ENCODE measurements at regions of chr1 and their contacts with region 1.

Region 1: GRCh38 chr1:12275369-12275768 is 45.5 kb downstream of the VPS13D start:
- DNase-seq: peak; percentile 5 to 75
- H3K4me3 ChIP-seq: no peak overlapping the region
- H3K27ac ChIP-seq: no peak overlapping the region
- H3K4me1 ChIP-seq: peaks cover 0 to 5% (median 0%) of the 10 kb centered on the region in 4 experiments; a peak in 1 of 7 replicates
- H3K27me3 ChIP-seq: no peaks in the 10 kb centered on the region
- CTCF ChIP-seq: peak; percentile 68 to 91 (median 81)
- EP300 ChIP-seq: no peak
- POLR2A ChIP-seq: no peak
- RAD21 ChIP-seq: peak; percentile 39

Region 2: GRCh38 chr1:12229835-12230548 is 45.4 kb before region 1 on chr1 and contains the start of gene VPS13D:
- CTCF ChIA-PET with region 1: interaction called, 12 read pairs
- POLR2A ChIA-PET with region 1: interaction called, 3 read pairs
- DNase-seq: peak; percentile 33 to 94
- H3K4me3 ChIP-seq: peak within 1 kb of the TSS; percentile 55 to 95 (median 66)
- H3K27ac ChIP-seq: no peak within 1 kb of the TSS
- H3K4me1 ChIP-seq: peaks cover 0 to 7% (median 3%) of the 10 kb centered on the region in 4 experiments; a peak in 4 of 7 replicates
- H3K27me3 ChIP-seq: no peaks in the 10 kb centered on the region; a peak in 1 of 7 replicates
- CTCF ChIP-seq: peak; percentile 83 to 92 (median 88)
- EP300 ChIP-seq: peak in 1 of 2 experiments; percentile 76; a peak in 1 of 3 replicates
- POLR2A ChIP-seq: no peak
- RAD21 ChIP-seq: no peak; a peak in 1 of 4 replicates
- total RNA-seq, gene VPS13D: 31.2 and 32.7 TPM in 2 replicates

Region 3: DNA sequence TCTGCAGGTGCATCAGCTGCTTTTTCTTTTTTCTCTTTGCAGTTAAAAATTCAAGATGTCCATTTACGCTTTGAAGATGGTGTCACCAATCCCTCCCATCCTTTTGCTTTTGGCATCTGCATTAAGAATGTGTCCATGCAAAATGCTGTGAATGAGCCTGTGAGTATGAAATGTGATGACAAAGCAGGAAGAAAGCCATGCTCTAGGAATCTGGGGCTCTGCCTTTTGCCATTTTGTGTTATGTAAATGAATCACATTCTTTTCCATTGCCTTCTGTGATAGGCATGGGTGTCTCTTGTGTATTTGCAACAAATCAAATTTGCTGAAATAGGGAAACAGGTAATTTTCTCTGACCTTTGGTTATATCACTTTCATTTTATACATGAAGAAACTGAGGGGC is 26.2 kb before region 1 on chr1:
- CTCF ChIA-PET with region 1: interaction called, 12 read pairs
- POLR2A ChIA-PET with region 1: no interaction called
- DNase-seq: peak in 1 of 2 experiments; percentile 19
- H3K4me3 ChIP-seq: no peak overlapping the region
- H3K27ac ChIP-seq: no peak overlapping the region
- H3K4me1 ChIP-seq: peaks cover 0 to 9% (median 6%) of the 10 kb centered on the region in 4 experiments; a peak in 4 of 7 replicates
- H3K27me3 ChIP-seq: no peaks in the 10 kb centered on the region
- CTCF ChIP-seq: no peak
- EP300 ChIP-seq: no peak
- POLR2A ChIP-seq: no peak
- RAD21 ChIP-seq: no peak

Region 4: DNA sequence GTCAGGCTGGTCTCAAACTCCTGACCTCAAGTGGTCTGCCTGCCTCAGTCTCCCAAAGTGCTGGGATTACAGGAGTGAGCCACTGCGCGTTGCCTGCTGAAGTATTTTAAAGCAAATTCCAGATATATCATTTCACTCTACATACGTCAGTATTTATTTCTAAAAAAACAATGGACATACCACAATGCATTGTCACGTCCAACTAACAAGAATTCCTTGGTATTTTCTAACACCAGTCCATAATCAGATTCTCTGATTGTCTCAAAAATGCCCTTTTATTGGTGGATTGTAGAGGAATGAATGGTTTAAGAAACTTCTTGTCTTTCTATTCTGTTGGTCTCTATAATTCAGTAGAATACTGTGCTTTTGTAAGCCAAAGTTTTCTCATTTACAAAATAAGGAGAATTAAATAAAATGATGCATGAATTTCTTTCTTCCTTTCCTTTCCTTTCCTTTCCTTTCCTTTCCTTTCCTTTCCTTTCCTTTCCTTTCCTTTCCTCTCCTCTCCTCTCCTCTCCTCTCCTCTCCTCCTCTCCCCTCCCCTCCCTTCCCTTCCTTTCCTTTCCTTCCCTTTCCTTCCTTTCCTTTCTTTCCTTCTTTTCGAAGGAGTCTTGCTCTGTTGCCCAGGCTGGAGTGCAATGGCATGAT is 10.3 kb after region 1 on chr1:
- CTCF ChIA-PET with region 1: interaction called, 38 read pairs
- POLR2A ChIA-PET with region 1: no interaction called
- DNase-seq: no peak
- H3K4me3 ChIP-seq: no peak overlapping the region
- H3K27ac ChIP-seq: no peak overlapping the region
- H3K4me1 ChIP-seq: no peaks in the 10 kb centered on the region
- H3K27me3 ChIP-seq: no peaks in the 10 kb centered on the region
- CTCF ChIP-seq: no peak
- EP300 ChIP-seq: no peak
- POLR2A ChIP-seq: no peak
- RAD21 ChIP-seq: no peak

Region 5: GRCh38 chr1:12333036-12333785 is 57.8 kb after region 1 on chr1:
- CTCF ChIA-PET with region 1: no interaction called
- POLR2A ChIA-PET with region 1: no interaction called
- DNase-seq: no peak
- H3K4me3 ChIP-seq: no peak overlapping the region
- H3K27ac ChIP-seq: no peak overlapping the region
- H3K4me1 ChIP-seq: no peaks in the 10 kb centered on the region
- H3K27me3 ChIP-seq: no peaks in the 10 kb centered on the region
- CTCF ChIP-seq: no peak
- EP300 ChIP-seq: no peak
- POLR2A ChIP-seq: no peak
- RAD21 ChIP-seq: no peak

Region 6: DNA sequence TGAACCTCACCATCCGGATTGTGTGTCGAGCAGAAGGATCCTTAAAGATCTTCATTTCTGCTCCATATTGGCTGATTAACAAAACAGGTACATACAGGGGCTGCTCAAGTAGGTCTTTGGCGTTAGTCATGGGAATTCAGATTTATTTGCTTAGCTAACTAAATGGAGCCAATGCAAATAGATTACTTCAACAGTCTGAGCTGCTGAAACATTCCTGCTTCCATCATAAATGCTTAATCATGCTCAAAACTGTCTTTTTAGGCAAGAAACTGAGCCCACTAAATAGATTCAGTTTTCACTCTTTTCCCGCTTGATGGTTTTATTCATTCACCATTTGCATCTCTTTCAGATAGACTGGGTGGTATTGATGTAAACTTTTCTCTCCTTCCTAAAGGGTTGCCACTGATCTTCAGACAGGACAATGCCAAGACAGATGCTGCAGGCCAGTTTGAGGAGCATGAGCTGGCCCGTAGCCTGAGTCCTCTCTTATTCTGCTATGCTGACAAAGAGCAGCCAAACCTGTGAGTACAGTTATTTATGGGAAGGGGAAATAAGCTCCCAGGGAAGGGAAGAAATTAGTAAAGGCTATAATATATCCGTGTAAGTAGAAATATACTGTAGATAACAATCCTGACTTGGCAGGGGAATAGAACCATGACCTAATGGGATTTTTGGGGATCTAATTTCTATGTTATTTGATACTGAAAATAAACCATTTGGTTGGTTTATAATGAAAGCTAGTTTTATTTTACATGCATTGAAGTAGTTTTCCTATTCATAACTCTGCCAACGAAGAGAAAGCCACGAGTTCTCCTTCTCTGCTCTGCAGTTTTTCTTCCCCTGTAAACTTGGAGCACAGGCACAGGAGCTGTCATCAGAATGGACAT is 80.9 kb after region 1 on chr1:
- CTCF ChIA-PET with region 1: interaction called, 11 read pairs
- POLR2A ChIA-PET with region 1: no interaction called
- DNase-seq: no peak
- H3K4me3 ChIP-seq: no peak overlapping the region
- H3K27ac ChIP-seq: no peak overlapping the region
- H3K4me1 ChIP-seq: peaks cover 0 to 6% (median 2%) of the 10 kb centered on the region in 4 experiments; a peak in 4 of 7 replicates
- H3K27me3 ChIP-seq: no peaks in the 10 kb centered on the region
- CTCF ChIP-seq: no peak
- EP300 ChIP-seq: no peak
- POLR2A ChIP-seq: no peak
- RAD21 ChIP-seq: no peak

Region 7: GRCh38 chr1:12658531-12659453 is 383.4 kb after region 1 on chr1:
- CTCF ChIA-PET with region 1: interaction called, 26 read pairs
- POLR2A ChIA-PET with region 1: no interaction called
- DNase-seq: peak; percentile 17 to 89
- H3K4me3 ChIP-seq: no peak overlapping the region
- H3K27ac ChIP-seq: no peak overlapping the region
- H3K4me1 ChIP-seq: no peaks in the 10 kb centered on the region
- H3K27me3 ChIP-seq: peaks cover 0 to 1% (median 0%) of the 10 kb centered on the region in 4 experiments; a peak in 1 of 7 replicates
- CTCF ChIP-seq: peak; percentile 83 to 98 (median 89)
- EP300 ChIP-seq: no peak
- POLR2A ChIP-seq: no peak
- RAD21 ChIP-seq: peak; percentile 95 to 96